ENCODE measurements at regions of chr7 and their contacts with region 1.

Region 1: DNA sequence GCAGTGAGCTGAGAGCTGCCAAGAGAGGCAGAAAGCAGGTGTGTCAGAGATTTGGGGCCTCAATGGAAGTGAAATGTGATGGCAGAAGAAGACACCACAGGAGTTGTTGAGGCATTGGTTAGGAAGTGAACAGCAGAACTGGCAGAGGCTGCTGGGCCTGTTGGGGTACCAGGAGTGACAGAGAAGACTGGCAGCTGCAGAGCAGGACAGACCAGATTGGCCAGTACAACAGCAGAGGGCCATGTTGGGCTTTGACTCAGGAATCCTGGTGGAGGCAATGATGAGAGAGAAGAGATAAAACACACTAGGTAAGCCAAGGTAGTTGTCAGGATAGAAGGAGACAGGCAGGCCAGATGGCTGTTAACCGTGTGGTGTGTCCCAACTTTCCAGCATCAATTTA is 19.9 kb upstream of the HERPUD2 start:
- DNase-seq: peak in 1 of 9 experiments; percentile 35
- ATAC-seq: no peak
- H3K4me3 ChIP-seq: no peak overlapping the region
- H3K4me3 Mint-ChIP-seq: no peak overlapping the region
- H3K27ac ChIP-seq: no peak overlapping the region
- H3K27ac Mint-ChIP-seq: peak overlapping the region; percentile 2
- H3K4me1 ChIP-seq: peaks cover 8% of the 10 kb centered on the region
- H3K4me1 Mint-ChIP-seq: peaks cover 8% of the 10 kb centered on the region
- H3K27me3 ChIP-seq: no peaks in the 10 kb centered on the region
- H3K27me3 Mint-ChIP-seq: no peaks in the 10 kb centered on the region
- CTCF ChIP-seq: no peak

Region 2: DNA sequence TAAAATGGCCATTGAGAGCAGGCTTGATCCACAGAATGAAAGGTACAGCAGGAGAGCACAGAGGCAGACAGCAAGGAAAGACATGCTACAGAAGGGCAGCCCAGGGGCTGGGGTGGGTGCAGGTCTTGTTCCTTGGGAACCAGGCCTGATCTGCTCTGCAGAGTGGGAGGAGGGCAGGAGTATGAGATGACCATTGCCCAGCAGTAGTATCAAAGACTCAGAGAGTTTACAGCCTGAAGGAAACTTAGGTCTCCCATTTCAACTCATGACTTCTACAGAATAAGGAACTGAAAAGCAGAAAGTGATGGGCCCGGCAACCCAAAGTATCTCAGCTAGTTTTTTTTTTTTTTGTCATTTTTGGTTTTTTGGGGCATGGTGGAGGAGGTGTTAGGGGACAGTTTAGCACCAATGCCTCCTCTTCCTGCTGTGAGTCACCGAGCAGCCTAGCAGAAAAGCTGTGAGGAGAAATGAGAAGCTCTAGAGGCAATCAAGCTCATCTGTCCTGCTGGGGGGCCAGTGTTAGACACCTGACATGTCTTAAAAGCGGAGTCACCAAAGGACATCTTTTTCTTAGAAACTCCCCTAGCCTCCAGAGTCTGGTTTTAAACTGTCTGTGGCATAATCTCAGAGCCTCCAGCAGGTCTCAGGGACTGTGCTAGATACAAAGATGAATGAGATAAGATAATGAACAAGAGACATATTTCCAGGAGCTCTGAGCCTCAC is 14.4 kb after region 1 on chr7:
- CTCF ChIA-PET with region 1: interaction called, 25 read pairs
- POLR2A ChIA-PET with region 1: interaction called, 5 read pairs
- intact Hi-C with region 1: no loop called
- DNase-seq: peak in 7 of 9 experiments; percentile 26 to 91 (median 52)
- ATAC-seq: peak; percentile 65
- H3K4me3 ChIP-seq: peak overlapping the region in 1 of 2 experiments; percentile 18
- H3K4me3 Mint-ChIP-seq: peak overlapping the region; percentile 26
- H3K27ac ChIP-seq: peak overlapping the region; percentile 22 to 77
- H3K27ac Mint-ChIP-seq: peak overlapping the region; percentile 78
- H3K4me1 ChIP-seq: peaks cover 56% of the 10 kb centered on the region
- H3K4me1 Mint-ChIP-seq: peaks cover 61% of the 10 kb centered on the region
- H3K27me3 ChIP-seq: no peaks in the 10 kb centered on the region
- H3K27me3 Mint-ChIP-seq: no peaks in the 10 kb centered on the region
- CTCF ChIP-seq: no peak

Region 3: GRCh38 chr7:35758421-35758820 is 43.6 kb after region 1 on chr7:
- CTCF ChIA-PET with region 1: no interaction called
- POLR2A ChIA-PET with region 1: no interaction called
- intact Hi-C with region 1: loop called in 1 of 2 experiments (anchors 5 kb)
- DNase-seq: peak in 3 of 9 experiments; percentile 5 to 53 (median 37)
- ATAC-seq: no peak
- H3K4me3 ChIP-seq: no peak overlapping the region
- H3K4me3 Mint-ChIP-seq: no peak overlapping the region
- H3K27ac ChIP-seq: no peak overlapping the region
- H3K27ac Mint-ChIP-seq: no peak overlapping the region
- H3K4me1 ChIP-seq: peaks cover 9% of the 10 kb centered on the region
- H3K4me1 Mint-ChIP-seq: peaks cover 12% of the 10 kb centered on the region
- H3K27me3 ChIP-seq: no peaks in the 10 kb centered on the region
- H3K27me3 Mint-ChIP-seq: no peaks in the 10 kb centered on the region
- CTCF ChIP-seq: no peak

Region 4: DNA sequence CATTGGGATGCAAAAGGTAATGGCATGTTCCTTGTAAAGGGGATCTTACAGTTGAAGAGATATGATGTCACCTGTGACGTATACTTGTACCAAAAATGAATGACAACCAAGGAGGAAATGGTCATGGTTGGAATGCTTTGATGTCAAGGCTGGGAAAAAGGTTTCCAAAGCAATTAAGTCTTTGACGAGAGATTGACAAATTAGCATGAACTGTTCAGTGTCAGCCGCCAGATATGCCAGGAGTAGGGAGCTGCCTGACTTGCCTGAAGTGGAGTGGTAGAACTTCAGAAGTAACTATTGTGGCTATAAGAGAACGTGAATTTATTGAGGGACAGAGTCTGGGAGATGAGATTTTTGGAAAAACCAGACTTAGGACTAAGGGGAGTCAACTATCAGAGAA is 174.1 kb after region 1 on chr7:
- CTCF ChIA-PET with region 1: no interaction called
- POLR2A ChIA-PET with region 1: no interaction called
- intact Hi-C with region 1: loop called in 1 of 2 experiments (anchors 5 kb)
- DNase-seq: no peak
- ATAC-seq: no peak
- H3K4me3 ChIP-seq: no peak overlapping the region
- H3K4me3 Mint-ChIP-seq: no peak overlapping the region
- H3K27ac ChIP-seq: no peak overlapping the region
- H3K27ac Mint-ChIP-seq: no peak overlapping the region
- H3K4me1 ChIP-seq: no peaks in the 10 kb centered on the region
- H3K4me1 Mint-ChIP-seq: peaks cover 26% of the 10 kb centered on the region
- H3K27me3 ChIP-seq: no peaks in the 10 kb centered on the region
- H3K27me3 Mint-ChIP-seq: no peaks in the 10 kb centered on the region
- CTCF ChIP-seq: no peak

Region 5: GRCh38 chr7:37633048-37633447 is 1918.2 kb after region 1 on chr7:
- CTCF ChIA-PET with region 1: no interaction called
- POLR2A ChIA-PET with region 1: no interaction called
- intact Hi-C with region 1: no loop called
- DNase-seq: peak in 1 of 9 experiments; percentile 22
- ATAC-seq: no peak
- H3K4me3 ChIP-seq: peak overlapping the region in 1 of 2 experiments; percentile 21
- H3K4me3 Mint-ChIP-seq: no peak overlapping the region
- H3K27ac ChIP-seq: no peak overlapping the region
- H3K27ac Mint-ChIP-seq: no peak overlapping the region
- H3K4me1 ChIP-seq: no peaks in the 10 kb centered on the region
- H3K4me1 Mint-ChIP-seq: no peaks in the 10 kb centered on the region
- H3K27me3 ChIP-seq: no peaks in the 10 kb centered on the region
- H3K27me3 Mint-ChIP-seq: peaks cover 8% of the 10 kb centered on the region
- CTCF ChIP-seq: no peak

Measured in CD8-positive, alpha-beta T cell (primary cell).